Right lobe of liver (tissue), 6 donors: ENCODE measurements at regions of chr14 and their contacts with region 1.

Region 1: DNA sequence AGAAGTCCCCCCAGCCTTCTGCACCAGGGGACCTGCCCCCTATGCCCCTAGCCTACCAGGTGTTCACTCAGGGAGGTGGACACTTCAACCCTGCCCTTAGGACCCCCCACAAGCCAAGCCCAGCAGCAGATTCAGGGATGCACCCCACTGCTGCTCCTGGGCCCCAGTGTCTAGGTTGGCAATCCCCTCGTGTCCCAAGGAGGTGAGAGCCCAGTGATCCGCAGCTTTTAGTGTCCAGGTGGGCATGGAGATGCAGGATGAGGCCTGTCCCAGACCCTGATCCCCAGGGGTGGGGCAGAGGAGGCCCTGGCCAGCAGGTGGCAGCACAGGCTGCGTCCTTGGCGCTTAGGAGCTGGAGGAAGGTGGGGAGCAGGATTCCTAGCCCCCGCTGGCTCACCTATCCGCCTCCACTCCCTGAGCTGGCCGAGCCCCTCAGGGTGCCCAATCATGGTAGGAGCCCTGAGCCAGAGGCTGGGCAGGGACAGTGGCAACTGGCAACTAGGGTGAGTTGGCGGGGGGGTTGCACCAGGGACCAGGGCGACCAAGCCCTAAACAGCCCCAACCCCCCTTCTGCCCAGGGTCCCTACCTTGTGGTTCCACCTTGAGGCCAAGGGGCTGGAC is 4.1 kb downstream of the CKB start:
- DNase-seq: peak in 2 of 3 donors; percentile 69 to 73
- ATAC-seq: peak; percentile 63 to 66 (median 65)
- H3K4me3 ChIP-seq: no peak overlapping the region
- H3K27ac ChIP-seq: no peak overlapping the region
- H3K4me1 ChIP-seq: peaks cover 0 to 25% (median 0%) of the 10 kb centered on the region in 4 donors
- H3K27me3 ChIP-seq: peaks cover 0 to 10% of the 10 kb centered on the region in 2 donors
- CTCF ChIP-seq: peak; percentile 80 to 96 (median 88)
- POLR2A ChIP-seq: no peak

Region 2: DNA sequence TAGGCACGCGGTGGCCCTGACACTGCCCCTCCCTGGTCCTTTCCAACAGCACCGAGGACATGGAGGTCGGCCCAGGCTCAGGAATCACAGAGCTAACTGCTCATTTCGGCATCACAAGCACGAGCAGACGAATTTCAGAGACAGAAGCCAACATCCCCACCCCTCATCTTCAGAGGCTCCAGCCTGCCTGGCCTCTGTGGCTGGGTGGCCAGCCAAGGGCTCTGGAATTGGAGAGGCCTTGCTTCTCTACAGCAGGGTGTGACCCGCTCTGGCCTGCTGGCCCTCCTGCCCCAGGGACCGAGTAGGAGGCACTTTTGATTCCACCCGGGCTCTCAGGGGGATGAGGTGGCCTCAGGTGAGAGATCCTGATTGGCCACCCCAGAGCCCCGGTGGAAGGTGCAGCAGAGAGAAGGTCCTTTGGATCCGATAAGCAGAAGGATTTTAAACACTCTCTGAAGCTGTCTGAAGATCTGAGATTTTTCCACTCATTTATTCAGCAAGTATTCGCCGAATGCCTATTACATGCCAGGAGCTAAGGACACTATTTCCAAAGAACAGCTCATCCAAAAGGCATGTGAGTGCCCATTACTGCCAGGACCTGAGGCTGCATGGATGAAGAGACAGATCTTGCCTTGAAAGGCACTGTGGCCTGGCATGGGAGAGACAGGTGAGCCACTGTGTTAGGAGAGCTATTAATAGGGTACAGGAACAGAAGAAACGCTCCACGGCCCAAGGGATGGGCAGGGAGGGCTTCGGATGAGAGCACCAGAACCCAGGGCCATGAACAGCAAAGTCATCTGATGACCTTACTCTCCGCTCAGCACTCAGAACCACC is 33.7 kb after region 1 on chr14:
- intact Hi-C with region 1: loop called in 1 of 2 experiments (anchors 5 kb)
- DNase-seq: peak in 2 of 3 donors; percentile 32 to 44
- ATAC-seq: no peak
- H3K4me3 ChIP-seq: no peak overlapping the region
- H3K27ac ChIP-seq: peak overlapping the region in 1 of 3 donors; percentile 36
- H3K4me1 ChIP-seq: no peaks in the 10 kb centered on the region
- H3K27me3 ChIP-seq: no peaks in the 10 kb centered on the region
- CTCF ChIP-seq: no peak
- POLR2A ChIP-seq: no peak